ENCODE measurements at regions of chr19 and their contacts with region 1.

Region 1: GRCh38 chr19:24033301-24033962 is 53.6 kb upstream of the ZNF254 start:
- DNase-seq: peak; percentile 63
- ATAC-seq: peak; percentile 97
- H3K4me3 Mint-ChIP-seq: peak overlapping the region; percentile 100
- H3K27ac Mint-ChIP-seq: peak overlapping the region; percentile 97
- H3K4me1 Mint-ChIP-seq: peaks cover 42% of the 10 kb centered on the region
- H3K27me3 Mint-ChIP-seq: no peaks in the 10 kb centered on the region
- CTCF ChIP-seq: no peak

Region 2: DNA sequence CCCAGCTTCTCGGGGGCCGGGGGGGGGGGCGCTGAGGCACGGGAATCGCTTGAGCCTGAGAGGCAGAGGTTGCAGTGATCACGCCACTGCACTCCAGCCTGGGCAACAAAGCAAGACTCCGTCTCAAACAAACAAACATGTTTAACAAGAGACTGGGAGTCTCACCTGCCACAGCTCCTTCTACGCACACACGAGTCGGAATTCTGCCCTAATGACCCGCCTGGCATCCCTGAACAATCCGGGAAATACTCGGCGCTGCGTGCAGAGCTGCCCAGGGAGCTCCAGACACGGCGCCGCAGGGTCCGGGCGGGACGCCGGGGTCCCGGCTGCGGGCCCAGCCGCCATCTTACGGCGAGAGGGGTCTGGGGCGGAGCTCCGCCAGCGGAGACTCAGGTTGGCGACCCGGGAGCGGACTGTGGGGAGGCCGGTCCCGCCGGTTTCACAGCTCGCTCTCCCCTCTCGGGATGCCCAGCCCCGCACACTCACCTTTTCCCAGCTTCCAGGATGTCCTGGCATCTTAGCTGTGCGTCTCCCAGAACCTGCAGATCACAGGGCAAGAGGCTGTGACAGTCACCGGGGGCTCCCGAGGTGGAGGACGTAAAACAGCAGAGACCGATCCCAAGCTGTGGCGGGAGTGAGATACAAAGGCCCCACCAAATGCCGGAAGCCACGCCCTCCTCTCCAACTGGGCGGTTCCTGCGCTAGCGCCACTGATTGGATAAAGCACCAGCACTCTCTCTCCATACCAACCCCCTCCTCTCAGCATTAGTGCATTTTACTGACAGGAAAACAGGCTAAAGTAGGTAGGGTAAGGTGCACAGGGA is 759.6 kb before region 1 on chr19:
- CTCF ChIA-PET with region 1: no interaction called
- POLR2A ChIA-PET with region 1: interaction called, 12 read pairs
- intact Hi-C with region 1: loop called (anchors 2 kb)
- DNase-seq: peak; percentile 89
- ATAC-seq: peak; percentile 98
- H3K4me3 Mint-ChIP-seq: peak overlapping the region; percentile 97
- H3K27ac Mint-ChIP-seq: peak overlapping the region; percentile 90
- H3K4me1 Mint-ChIP-seq: peaks cover 30% of the 10 kb centered on the region
- H3K27me3 Mint-ChIP-seq: no peaks in the 10 kb centered on the region
- CTCF ChIP-seq: no peak

Region 3: DNA sequence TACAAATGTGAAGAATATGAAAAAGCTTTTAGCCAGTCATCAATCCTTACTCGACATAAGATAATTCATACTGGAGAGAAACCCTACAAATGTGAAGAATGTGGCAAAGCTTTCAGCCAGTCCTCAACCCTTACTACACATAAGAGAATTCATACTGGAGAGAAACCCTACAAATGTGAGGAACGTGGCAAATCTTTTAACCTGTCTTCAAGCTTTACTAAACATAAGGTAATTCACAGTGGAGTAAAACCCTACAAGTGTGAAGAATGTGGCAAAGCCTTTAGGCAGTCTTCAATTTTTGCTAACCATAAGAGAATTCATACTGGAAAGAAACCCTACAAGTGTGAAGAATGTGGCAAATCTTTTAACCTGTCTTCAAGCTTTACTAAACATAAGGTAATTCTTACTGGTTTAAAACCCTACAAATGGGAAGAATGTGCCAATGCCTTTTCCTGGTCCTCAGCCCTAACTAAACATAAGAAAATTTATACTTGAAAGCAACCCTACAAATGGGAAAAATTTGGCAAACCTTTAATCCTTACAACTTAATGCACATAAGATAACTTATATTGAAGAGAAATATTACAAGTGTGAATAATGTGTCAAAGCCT is 200.6 kb before region 1 on chr19:
- CTCF ChIA-PET with region 1: no interaction called
- POLR2A ChIA-PET with region 1: no interaction called
- intact Hi-C with region 1: no loop called
- DNase-seq: no peak
- ATAC-seq: no peak
- H3K4me3 Mint-ChIP-seq: no peak overlapping the region
- H3K27ac Mint-ChIP-seq: no peak overlapping the region
- H3K4me1 Mint-ChIP-seq: no peaks in the 10 kb centered on the region
- H3K27me3 Mint-ChIP-seq: no peaks in the 10 kb centered on the region
- CTCF ChIP-seq: no peak

Region 4: GRCh38 chr19:23867895-23868294 is 165.5 kb before region 1 on chr19:
- CTCF ChIA-PET with region 1: no interaction called
- POLR2A ChIA-PET with region 1: no interaction called
- intact Hi-C with region 1: no loop called
- DNase-seq: no peak
- ATAC-seq: no peak
- H3K4me3 Mint-ChIP-seq: no peak overlapping the region
- H3K27ac Mint-ChIP-seq: no peak overlapping the region
- H3K4me1 Mint-ChIP-seq: no peaks in the 10 kb centered on the region
- H3K27me3 Mint-ChIP-seq: no peaks in the 10 kb centered on the region
- CTCF ChIP-seq: no peak

Region 5: GRCh38 chr19:23914402-23915301 is 118.8 kb before region 1 on chr19 and contains the start of gene ZNF726:
- CTCF ChIA-PET with region 1: no interaction called
- POLR2A ChIA-PET with region 1: interaction called, 10 read pairs
- intact Hi-C with region 1: loop called (anchors 1 kb)
- DNase-seq: peak; percentile 67
- ATAC-seq: peak; percentile 97
- H3K4me3 Mint-ChIP-seq: peak within 1 kb of the TSS; percentile 96
- H3K27ac Mint-ChIP-seq: peak within 1 kb of the TSS; percentile 83
- H3K4me1 Mint-ChIP-seq: peaks cover 10% of the 10 kb centered on the region
- H3K27me3 Mint-ChIP-seq: no peaks in the 10 kb centered on the region
- CTCF ChIP-seq: no peak
- total RNA-seq, gene ZNF726: 8.2 and 9.4 TPM in 2 replicates

Region 6: GRCh38 chr19:23971598-23971997 is 61.8 kb before region 1 on chr19:
- CTCF ChIA-PET with region 1: no interaction called
- POLR2A ChIA-PET with region 1: no interaction called
- intact Hi-C with region 1: no loop called
- DNase-seq: no peak
- ATAC-seq: no peak
- H3K4me3 Mint-ChIP-seq: no peak overlapping the region
- H3K27ac Mint-ChIP-seq: no peak overlapping the region
- H3K4me1 Mint-ChIP-seq: no peaks in the 10 kb centered on the region
- H3K27me3 Mint-ChIP-seq: peaks cover 16% of the 10 kb centered on the region
- CTCF ChIP-seq: no peak

Region 7: GRCh38 chr19:24074720-24075454 is 41.5 kb after region 1 on chr19:
- CTCF ChIA-PET with region 1: no interaction called
- POLR2A ChIA-PET with region 1: no interaction called
- intact Hi-C with region 1: no loop called
- DNase-seq: no peak
- ATAC-seq: no peak
- H3K4me3 Mint-ChIP-seq: no peak overlapping the region
- H3K27ac Mint-ChIP-seq: no peak overlapping the region
- H3K4me1 Mint-ChIP-seq: no peaks in the 10 kb centered on the region
- H3K27me3 Mint-ChIP-seq: no peaks in the 10 kb centered on the region
- CTCF ChIP-seq: no peak

Measured in activated B cell treated with CpG ODN at 0.5 μM for 24 hours (primary cell).